ENCODE measurements at regions of chr17 and their contacts with region 1.

Region 1: DNA sequence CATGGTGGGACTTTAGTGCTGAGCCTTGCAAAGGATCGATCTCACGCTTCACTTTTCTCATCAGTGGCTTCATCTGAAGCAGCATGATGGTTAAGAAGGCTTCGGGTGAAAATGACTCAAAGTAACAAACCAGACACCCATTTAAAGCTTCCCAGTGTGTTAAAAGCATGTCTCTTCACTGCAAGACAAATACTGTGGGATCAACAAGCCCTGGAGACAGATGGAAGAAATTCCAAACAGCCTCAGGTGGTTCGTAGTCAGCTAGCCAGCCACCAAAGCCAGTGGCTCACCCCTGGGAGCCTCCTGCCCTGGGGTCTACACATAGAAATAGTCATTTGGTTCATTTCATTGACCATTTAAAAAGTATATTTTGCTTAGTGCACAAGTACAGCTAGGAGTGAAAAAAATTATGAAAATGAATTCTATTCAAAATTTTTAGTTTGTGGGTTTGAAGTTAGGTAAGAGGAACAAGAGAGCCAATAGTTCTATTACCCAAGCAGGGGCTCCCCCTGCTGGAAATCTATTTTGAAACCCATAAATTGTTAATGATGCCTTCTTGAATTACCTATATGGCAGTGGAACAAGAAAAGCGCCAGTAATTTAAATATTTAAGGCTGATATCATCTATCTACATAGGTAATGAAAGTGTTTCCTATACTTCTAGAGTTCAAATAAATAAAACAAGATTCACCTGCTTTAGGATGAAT is 51.6 kb downstream of the PMP22 start:
- DNase-seq: peak; percentile 31
- H3K4me3 ChIP-seq: no peak overlapping the region
- H3K27ac ChIP-seq: no peak overlapping the region
- H3K4me1 ChIP-seq: peaks cover 0 to 5% of the 10 kb centered on the region in 2 experiments; a peak in 1 of 4 replicates
- H3K27me3 ChIP-seq: no peaks in the 10 kb centered on the region
- CTCF ChIP-seq: peak; percentile 51
- EP300 ChIP-seq: no peak
- RAD21 ChIP-seq: peak; percentile 70

Region 2: GRCh38 chr17:15038656-15039055 is 174.9 kb before region 1 on chr17:
- CTCF ChIA-PET with region 1: no interaction called
- POLR2A ChIA-PET with region 1: no interaction called
- DNase-seq: no peak
- H3K4me3 ChIP-seq: no peak overlapping the region
- H3K27ac ChIP-seq: no peak overlapping the region
- H3K4me1 ChIP-seq: no peaks in the 10 kb centered on the region
- H3K27me3 ChIP-seq: peaks cover 4% of the 10 kb centered on the region; the same call in 1 of the 2 replicates
- CTCF ChIP-seq: no peak
- EP300 ChIP-seq: no peak
- RAD21 ChIP-seq: no peak

Region 3: DNA sequence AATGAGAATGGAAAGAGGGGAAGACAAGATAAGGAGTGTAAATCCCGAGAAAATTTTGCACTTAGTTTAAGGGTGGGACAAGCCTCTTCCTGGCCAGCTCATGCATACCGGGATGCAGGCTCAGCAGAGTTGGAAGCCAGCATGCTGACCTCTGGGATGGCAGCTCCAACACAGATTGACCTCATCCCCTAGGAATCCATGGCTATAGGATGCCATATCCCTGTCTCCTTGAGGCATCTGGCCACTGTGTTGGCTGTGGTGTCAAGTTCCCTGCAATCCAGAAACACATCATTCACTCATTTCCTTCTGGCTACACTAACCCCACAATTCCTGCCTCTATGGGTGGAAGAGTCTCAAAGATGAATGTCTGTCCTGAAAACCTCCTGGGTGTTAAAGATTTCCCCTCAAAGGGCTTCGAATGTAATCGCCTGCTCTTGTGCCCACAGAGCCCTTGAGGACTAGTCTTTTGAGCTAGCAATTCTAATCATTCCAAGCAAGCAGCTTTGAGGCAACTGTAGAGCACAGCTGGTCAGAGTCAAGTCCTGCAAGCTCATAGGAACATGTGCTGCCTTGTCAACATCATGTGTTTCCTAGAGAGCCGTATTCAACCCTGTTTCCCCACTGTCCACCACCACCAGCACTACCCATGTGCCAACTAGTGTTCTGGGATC is 89.8 kb before region 1 on chr17:
- CTCF ChIA-PET with region 1: no interaction called
- POLR2A ChIA-PET with region 1: no interaction called
- DNase-seq: no peak
- H3K4me3 ChIP-seq: no peak overlapping the region
- H3K27ac ChIP-seq: no peak overlapping the region; a peak in 1 of 4 replicates
- H3K4me1 ChIP-seq: no peaks in the 10 kb centered on the region
- H3K27me3 ChIP-seq: no peaks in the 10 kb centered on the region
- CTCF ChIP-seq: no peak
- EP300 ChIP-seq: no peak
- RAD21 ChIP-seq: no peak

Region 4: GRCh38 chr17:15230866-15231265 is 17.3 kb after region 1 on chr17:
- CTCF ChIA-PET with region 1: interaction called, 11 read pairs
- POLR2A ChIA-PET with region 1: interaction called, 3 read pairs
- DNase-seq: no peak
- H3K4me3 ChIP-seq: no peak overlapping the region
- H3K27ac ChIP-seq: no peak overlapping the region
- H3K4me1 ChIP-seq: no peaks in the 10 kb centered on the region
- H3K27me3 ChIP-seq: no peaks in the 10 kb centered on the region
- CTCF ChIP-seq: no peak
- EP300 ChIP-seq: no peak
- RAD21 ChIP-seq: no peak

Region 5: DNA sequence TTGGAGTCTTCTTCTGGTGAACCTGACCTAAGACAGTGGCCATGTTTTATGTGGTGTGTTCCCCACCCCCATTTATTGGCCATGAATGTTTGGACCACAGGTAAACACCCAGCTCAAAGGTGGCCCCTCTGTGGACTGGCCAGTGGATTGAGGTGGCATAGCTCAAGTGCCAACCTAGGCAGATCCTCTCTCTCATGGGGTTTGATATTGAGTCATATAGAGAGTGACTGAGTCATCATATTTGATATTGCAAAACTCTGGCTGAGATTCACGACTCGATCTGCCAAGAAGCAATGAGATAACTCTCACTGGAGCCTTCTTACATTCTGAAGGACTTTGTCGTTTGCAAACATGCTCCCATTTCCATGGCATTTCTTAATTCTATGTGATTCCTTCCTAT is 138.4 kb after region 1 on chr17:
- CTCF ChIA-PET with region 1: no interaction called
- POLR2A ChIA-PET with region 1: no interaction called
- DNase-seq: no peak
- H3K4me3 ChIP-seq: no peak overlapping the region
- H3K27ac ChIP-seq: peak overlapping the region in 1 of 2 experiments; percentile 70; a peak in 2 of 4 replicates
- H3K4me1 ChIP-seq: peaks cover 5 to 11% of the 10 kb centered on the region in 2 experiments; a peak in 3 of 4 replicates
- H3K27me3 ChIP-seq: no peaks in the 10 kb centered on the region
- CTCF ChIP-seq: no peak
- EP300 ChIP-seq: no peak
- RAD21 ChIP-seq: no peak